ENCODE measurements at regions of chr12 and their contacts with region 1.

Region 1: DNA sequence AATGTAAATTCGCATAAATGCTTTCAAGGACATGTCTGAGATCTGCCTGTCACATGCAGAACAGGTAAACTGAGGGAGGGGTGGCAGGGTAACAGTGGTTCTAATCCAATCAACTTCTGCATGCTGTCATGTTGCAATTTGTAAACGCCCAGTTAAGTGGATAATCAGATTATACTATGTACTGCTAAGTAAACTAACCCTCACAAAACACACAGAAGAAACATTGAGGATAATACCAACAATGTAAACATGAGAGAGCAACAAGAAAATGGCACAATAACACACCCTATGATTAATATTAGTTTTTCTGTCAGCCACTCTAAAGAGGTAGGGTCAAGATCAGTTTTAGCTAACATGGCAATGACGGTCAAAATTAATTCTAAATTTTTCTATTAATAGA is 123.7 kb downstream of the KIF21A start:
- DNase-seq: no peak
- H3K4me3 ChIP-seq: no peak overlapping the region
- H3K27ac ChIP-seq: no peak overlapping the region
- H3K4me1 ChIP-seq: no peaks in the 10 kb centered on the region
- H3K27me3 ChIP-seq: no peaks in the 10 kb centered on the region
- CTCF ChIP-seq: no peak

Region 2: DNA sequence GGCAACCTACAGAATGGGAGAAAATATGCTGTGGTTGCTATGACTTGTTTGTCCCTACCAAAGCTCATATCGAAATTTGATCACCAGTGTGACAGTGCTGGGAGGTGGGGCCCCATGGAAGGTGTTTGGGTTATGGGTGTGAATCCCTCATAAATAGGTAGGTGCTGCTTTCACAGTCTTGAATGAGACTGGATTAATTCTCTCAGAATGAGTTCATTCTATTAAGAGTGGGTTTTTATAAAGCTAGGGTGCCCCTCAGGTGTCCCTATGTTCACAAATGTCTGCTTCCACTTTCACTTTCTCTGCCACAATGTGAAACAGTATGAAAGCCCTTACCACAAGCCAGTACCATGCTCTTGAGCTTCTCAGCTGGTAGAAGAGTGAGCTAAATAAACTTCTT is 547.3 kb before region 1 on chr12:
- CTCF ChIA-PET with region 1: no interaction called
- dilution Hi-C with region 1: no loop called
- in situ Hi-C with region 1: no loop called
- intact Hi-C with region 1: no loop called
- DNase-seq: no peak
- H3K4me3 ChIP-seq: no peak overlapping the region
- H3K27ac ChIP-seq: no peak overlapping the region
- H3K4me1 ChIP-seq: no peaks in the 10 kb centered on the region
- H3K27me3 ChIP-seq: no peaks in the 10 kb centered on the region
- CTCF ChIP-seq: no peak

Region 3: DNA sequence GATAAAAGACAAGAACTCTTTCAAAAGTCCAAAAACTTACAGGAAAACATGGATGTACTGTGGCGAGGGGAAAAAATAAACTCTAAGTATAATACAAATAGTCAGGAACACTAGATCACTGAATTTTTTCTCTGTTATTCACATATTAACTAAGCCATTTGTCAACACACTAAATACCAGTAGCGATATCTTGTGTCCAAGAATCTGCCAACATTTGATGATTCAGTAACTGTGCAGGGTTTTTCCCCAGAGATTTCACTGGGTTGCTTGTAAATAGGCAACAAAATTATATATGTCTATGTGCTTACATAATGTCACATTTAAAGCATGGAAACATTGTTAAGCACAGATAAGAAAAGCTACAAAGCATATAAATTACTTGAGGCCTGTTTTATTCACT is 82.2 kb before region 1 on chr12:
- CTCF ChIA-PET with region 1: no interaction called
- dilution Hi-C with region 1: no loop called
- in situ Hi-C with region 1: no loop called
- intact Hi-C with region 1: no loop called
- DNase-seq: peak; percentile 31
- H3K4me3 ChIP-seq: no peak overlapping the region
- H3K27ac ChIP-seq: no peak overlapping the region
- H3K4me1 ChIP-seq: no peaks in the 10 kb centered on the region
- H3K27me3 ChIP-seq: no peaks in the 10 kb centered on the region
- CTCF ChIP-seq: no peak

Region 4: GRCh38 chr12:39354955-39355354 is 35.8 kb after region 1 on chr12:
- CTCF ChIA-PET with region 1: no interaction called
- dilution Hi-C with region 1: no loop called
- in situ Hi-C with region 1: no loop called
- intact Hi-C with region 1: no loop called
- DNase-seq: peak; percentile 12
- H3K4me3 ChIP-seq: no peak overlapping the region
- H3K27ac ChIP-seq: no peak overlapping the region
- H3K4me1 ChIP-seq: no peaks in the 10 kb centered on the region
- H3K27me3 ChIP-seq: no peaks in the 10 kb centered on the region
- CTCF ChIP-seq: no peak

Region 5: DNA sequence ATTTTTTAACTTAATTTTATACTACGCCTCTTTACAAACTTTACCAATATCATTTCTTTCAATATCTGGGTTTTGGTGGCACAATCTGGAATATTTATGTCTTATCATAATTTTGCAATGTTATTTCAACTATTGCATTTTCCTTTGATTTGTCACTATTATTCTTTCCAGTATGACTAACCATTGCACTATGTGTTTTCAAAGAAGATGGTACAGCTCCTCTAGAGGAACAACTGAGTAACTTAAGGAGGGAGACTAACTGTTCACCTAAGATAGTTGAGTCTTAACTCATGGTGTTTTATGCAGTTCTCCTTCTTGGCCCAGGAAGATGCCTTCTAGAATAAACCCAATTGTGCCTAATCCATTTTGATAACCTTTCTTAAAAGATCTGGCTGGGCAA is 184.3 kb after region 1 on chr12:
- CTCF ChIA-PET with region 1: no interaction called
- dilution Hi-C with region 1: no loop called
- in situ Hi-C with region 1: no loop called
- intact Hi-C with region 1: loop called (anchors 1 kb)
- DNase-seq: peak; percentile 68
- H3K4me3 ChIP-seq: no peak overlapping the region
- H3K27ac ChIP-seq: no peak overlapping the region
- H3K4me1 ChIP-seq: peaks cover 19% of the 10 kb centered on the region
- H3K27me3 ChIP-seq: no peaks in the 10 kb centered on the region
- CTCF ChIP-seq: peak; percentile 55 to 62

Region 6: DNA sequence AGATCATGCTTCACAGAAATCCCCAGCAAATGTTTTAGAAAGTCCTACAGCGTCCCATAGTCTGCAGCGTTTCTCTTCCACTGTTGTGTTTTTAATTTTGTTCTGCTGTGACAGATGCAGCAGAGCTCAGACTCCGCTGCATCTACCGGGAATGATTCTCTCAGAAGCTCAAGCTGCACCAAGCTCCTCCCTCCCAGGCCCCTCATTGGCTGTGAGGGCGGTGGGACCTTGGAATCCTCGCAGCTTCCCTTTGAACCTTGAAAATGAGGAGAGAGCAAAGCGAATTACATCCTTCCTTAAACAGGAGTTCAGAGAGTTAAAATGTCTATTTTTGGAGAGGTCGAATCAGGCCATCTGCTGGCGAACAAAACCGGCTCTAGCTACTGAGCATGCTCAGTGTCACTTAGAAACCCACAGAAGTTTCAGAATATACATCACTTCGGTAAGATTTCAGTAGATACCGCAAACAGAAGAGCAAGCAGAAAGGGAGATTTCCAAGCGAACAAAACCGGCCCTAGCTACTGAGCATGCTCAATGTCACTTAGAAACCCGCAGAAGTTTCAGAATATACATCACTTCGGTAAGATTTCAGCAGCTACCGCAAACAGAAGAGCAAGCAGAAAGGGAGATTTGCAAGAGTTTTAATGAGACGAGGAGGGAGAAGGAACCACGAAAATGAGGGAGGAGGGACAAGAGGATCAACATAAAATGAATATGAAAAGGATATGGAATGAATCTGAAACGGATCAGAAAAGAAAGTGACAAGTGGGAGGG is 300.7 kb after region 1 on chr12 and contains the start of gene ABCD2:
- CTCF ChIA-PET with region 1: no interaction called
- dilution Hi-C with region 1: no loop called
- in situ Hi-C with region 1: no loop called
- intact Hi-C with region 1: loop called (anchors 5 kb)
- DNase-seq: peak; percentile 77
- H3K4me3 ChIP-seq: peak within 1 kb of the TSS; percentile 60 to 79 (median 64)
- H3K27ac ChIP-seq: peak within 1 kb of the TSS; percentile 37
- H3K4me1 ChIP-seq: peaks cover 12% of the 10 kb centered on the region
- H3K27me3 ChIP-seq: no peaks in the 10 kb centered on the region
- CTCF ChIP-seq: peak in 1 of 2 donors; percentile 36
- total RNA-seq, gene ABCD2: under 0.01 TPM in 1 of 2 donors, not detected in the other